GM13976 (cell line): ENCODE measurements at regions of chr1 and their contacts with region 1.

Region 1: GRCh38 chr1:164786980-164787833 is 228.2 kb downstream of the PBX1 start:
- DNase-seq: peak; percentile 85
- CTCF ChIP-seq: peak; percentile 92

Region 2: GRCh38 chr1:163410073-163410999 is 1376.9 kb before region 1 on chr1:
- in situ Hi-C with region 1: loop called (anchors 25 kb)
- DNase-seq: peak; percentile 46
- CTCF ChIP-seq: peak; percentile 69

Region 3: GRCh38 chr1:163528710-163529348 is 1258.4 kb before region 1 on chr1:
- in situ Hi-C with region 1: loop called (anchors 25 kb)
- DNase-seq: peak; percentile 16
- CTCF ChIP-seq: peak; percentile 26

Region 4: GRCh38 chr1:164716992-164717703 is 70.1 kb before region 1 on chr1:
- in situ Hi-C with region 1: no loop called
- DNase-seq: no peak
- CTCF ChIP-seq: no peak

Region 5: DNA sequence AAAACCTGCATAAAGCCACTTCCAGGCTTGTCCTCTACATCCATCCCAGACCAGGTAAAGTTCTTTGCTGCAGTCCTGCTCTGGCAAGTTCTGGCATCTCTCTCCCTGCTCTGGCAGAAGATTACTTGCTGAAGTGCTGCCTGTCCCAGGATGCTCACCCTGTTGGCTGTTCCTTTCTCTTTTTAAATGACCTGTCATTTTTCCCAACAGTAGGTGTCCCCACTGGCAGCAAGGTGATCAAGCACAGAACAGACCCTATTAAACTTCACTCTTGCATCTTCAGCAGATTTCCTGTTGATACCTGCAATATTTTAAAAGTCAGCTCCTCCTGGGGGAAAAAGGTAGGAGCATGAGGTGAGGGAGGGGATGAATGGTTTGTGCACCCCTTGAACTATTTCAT is 104.4 kb after region 1 on chr1:
- in situ Hi-C with region 1: no loop called
- DNase-seq: no peak
- CTCF ChIP-seq: no peak